ENCODE measurements at regions of chr6 and their contacts with region 1.

Region 1: GRCh38 chr6:142387997-142388815 is 86.4 kb downstream of the ADGRG6 start:
- DNase-seq: peak; percentile 34

Region 2: GRCh38 chr6:142301651-142302370 is 86.4 kb before region 1 on chr6 and contains the start of gene ADGRG6:
- CTCF ChIA-PET with region 1: interaction called, 14 read pairs
- POLR2A ChIA-PET with region 1: interaction called, 3 read pairs
- DNase-seq: peak; percentile 69

Measured in HEK293T (cell line).